HAP-1 (cell line): ENCODE measurements at regions of chr4 and their contacts with region 1.

Region 1: GRCh38 chr4:184273166-184274147 is 55.8 kb upstream of the ENPP6 start:
- DNase-seq: no peak
- H3K4me3 ChIP-seq: no peak overlapping the region
- H3K4me1 ChIP-seq: peaks cover 2% of the 10 kb centered on the region
- H3K27me3 ChIP-seq: no peaks in the 10 kb centered on the region

Region 2: GRCh38 chr4:183940864-183941263 is 332.6 kb before region 1 on chr4:
- in situ Hi-C with region 1: no loop called
- DNase-seq: no peak
- H3K4me3 ChIP-seq: no peak overlapping the region
- H3K4me1 ChIP-seq: peaks cover 12% of the 10 kb centered on the region
- H3K27me3 ChIP-seq: no peaks in the 10 kb centered on the region

Region 3: DNA sequence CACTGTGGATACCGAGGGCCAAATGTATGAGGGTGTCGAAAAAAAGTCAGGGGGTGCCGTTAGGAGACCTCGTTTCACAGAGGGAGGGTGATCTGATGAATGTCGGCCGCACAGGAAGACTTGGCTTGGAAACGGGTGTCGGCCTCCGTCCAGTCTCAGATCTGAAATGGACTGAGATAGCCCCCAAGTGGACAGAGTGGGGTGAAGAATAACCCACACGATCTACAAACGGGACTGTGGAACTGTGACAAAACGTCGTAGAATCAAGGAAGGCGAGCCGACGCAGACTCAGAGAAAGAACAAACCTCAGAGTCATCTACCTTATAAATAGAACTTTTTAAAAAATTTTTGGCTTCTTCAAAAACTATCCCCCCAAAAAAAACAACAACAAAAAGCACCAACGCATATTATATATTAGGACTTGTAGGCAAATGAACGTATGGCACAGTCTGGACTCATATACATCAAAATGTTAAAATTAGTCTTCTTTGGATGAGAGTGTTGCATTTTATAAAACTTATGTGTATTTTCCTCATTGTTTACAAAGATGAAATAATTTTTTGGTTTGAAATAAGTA is 264.7 kb after region 1 on chr4:
- in situ Hi-C with region 1: loop called (anchors 10 kb)
- DNase-seq: peak; percentile 66 to 79
- H3K4me3 ChIP-seq: peak overlapping the region; percentile 49
- H3K4me1 ChIP-seq: peaks cover 6% of the 10 kb centered on the region; the same call in 1 of the 2 replicates
- H3K27me3 ChIP-seq: no peaks in the 10 kb centered on the region